Left ventricle myocardium inferior (tissue), 1 donor: ENCODE measurements at regions of chr2 and their contacts with region 1.

Region 1: DNA sequence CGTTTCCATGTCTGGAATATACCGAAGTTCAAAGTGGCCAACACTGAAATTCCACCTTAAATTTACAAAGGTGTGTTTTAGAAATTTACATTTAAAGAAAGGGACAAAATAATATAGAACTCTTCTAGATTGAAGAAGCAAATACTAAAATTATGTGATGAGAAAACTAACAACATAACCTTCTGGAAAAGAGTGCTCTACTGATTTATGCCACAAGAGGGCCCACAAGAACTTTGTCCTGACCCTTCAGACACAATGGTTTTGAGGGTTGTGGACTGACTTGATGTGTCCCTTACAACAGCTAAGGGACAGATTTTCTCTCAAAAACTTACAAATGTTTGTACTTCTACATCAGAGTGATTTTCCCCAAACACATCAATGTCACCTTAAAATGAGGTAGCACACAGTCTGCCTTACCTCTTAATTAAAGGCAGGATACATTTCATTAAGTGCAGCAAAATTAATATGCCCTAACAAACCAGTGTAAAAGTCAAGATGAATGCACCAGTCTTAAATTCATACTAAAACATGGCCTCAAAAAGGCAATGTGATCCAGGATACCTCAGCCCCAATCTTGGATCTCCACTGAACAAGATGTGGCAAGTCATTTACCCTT is 36.2 kb downstream of the EIF2AK3 start:
- DNase-seq: no peak
- H3K4me3 ChIP-seq: no peak overlapping the region
- H3K27ac ChIP-seq: no peak overlapping the region
- H3K4me1 ChIP-seq: peaks cover 5% of the 10 kb centered on the region
- H3K27me3 ChIP-seq: no peaks in the 10 kb centered on the region
- CTCF ChIP-seq: peak; percentile 87

Region 2: DNA sequence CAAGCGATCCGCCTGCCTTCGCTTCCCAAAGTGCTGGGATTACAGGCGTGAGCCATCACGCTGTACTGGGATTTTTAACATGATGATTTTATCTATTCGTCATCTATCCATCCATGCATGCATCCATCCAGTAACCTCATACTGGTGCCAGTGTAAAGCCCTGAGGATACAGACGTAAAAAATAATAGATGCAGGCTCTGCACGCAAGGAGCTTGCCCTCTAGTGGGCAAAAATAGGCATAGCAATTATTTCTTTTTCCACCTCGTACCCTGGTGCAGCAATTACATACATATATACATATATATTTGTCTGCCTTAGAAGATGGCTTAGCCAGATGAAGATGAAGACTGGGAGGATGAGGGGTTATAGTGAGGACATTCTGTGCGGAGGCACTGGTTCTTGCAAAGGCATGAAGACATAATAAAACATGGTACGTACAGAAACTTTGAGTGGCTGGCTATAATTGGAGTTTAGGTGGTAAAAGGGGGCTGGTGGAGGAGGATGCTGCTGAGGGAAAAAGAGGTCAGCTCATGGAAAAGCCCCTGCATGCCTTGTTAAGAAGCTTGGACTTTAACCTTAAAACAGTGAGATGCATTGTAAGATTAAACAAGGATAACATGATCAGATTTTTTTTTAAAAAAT is 80.8 kb after region 1 on chr2:
- intact Hi-C with region 1: loop called (anchors 2 kb)
- DNase-seq: no peak
- H3K4me3 ChIP-seq: no peak overlapping the region
- H3K27ac ChIP-seq: no peak overlapping the region
- H3K4me1 ChIP-seq: peaks cover 3% of the 10 kb centered on the region
- H3K27me3 ChIP-seq: no peaks in the 10 kb centered on the region
- CTCF ChIP-seq: peak; percentile 93

Region 3: GRCh38 chr2:88818381-88818780 is 227.3 kb after region 1 on chr2:
- intact Hi-C with region 1: no loop called
- DNase-seq: no peak
- H3K4me3 ChIP-seq: no peak overlapping the region
- H3K27ac ChIP-seq: no peak overlapping the region
- H3K4me1 ChIP-seq: peaks cover 3% of the 10 kb centered on the region
- H3K27me3 ChIP-seq: no peaks in the 10 kb centered on the region
- CTCF ChIP-seq: no peak